Endothelial cell of umbilical vein (primary cell): ENCODE measurements at regions of chr19 and their contacts with region 1.

Region 1: GRCh38 chr19:14136509-14137281 is at the start of gene ASF1B:
- DNase-seq: peak; percentile 100
- H3K4me3 ChIP-seq: peak within 1 kb of the TSS; percentile 59 to 93 (median 72)
- H3K27ac ChIP-seq: peak within 1 kb of the TSS; percentile 71
- H3K4me1 ChIP-seq: peaks cover 15% of the 10 kb centered on the region
- H3K27me3 ChIP-seq: no peaks in the 10 kb centered on the region
- CTCF ChIP-seq: peak; percentile 85 to 96
- POLR2A ChIP-seq: peak; percentile 90
- total RNA-seq, gene ASF1B: 37.1 and 39.1 TPM in 2 replicates

Region 2: DNA sequence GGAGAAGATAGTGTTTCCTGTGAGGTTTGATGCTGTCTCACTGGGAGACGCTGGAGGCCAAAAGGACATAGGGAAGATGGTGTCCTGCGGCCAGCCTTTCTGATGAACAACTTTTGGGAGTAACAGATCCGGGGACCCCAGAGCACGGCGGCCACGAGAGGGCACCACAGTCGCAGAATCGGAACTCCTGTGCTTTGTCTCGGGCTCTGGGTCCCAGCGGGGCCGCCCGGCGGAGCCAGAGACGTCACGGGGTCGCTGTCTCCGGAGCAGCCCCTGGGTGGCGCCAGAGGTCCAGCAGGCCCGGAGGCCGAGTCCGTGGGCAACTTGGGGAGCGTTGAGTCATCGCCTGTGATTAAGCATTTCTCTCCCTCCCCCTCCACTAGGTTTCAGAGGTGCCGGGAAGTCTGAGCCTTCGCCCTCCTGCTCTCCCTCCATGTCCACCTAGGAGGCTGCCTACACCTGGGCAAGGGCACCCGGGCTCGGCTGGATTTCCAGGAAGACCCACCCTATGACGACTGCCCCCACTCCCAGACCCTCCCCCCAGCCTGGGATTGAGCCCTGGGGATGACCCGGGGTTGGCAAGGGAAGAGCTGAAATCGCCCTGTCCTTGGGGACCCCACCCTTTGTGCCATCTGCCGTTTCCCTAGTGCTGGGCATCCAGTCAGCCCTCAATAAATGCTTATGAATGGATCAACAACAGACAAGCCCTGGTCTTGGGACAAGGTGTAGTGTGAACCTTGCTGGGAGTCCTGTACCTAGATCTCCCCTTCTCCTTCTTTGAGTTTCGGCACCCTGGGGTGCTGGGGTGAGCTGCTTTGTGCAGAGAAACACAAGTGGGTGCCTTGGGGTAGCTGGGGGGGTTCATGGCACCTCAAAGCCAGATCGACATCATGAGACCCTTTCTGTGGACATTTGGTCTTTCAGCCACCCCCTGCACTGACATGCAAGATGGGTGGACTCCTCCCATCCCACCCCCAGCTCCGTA is 256.3 kb before region 1 on chr19:
- CTCF ChIA-PET with region 1: interaction called, 11 read pairs
- POLR2A ChIA-PET with region 1: no interaction called
- dilution Hi-C with region 1: no loop called
- intact Hi-C with region 1: loop called (anchors 1 kb)
- DNase-seq: peak; percentile 96
- H3K4me3 ChIP-seq: peak overlapping the region in 1 of 3 experiments; percentile 4
- H3K27ac ChIP-seq: peak overlapping the region; percentile 78
- H3K4me1 ChIP-seq: peaks cover 5% of the 10 kb centered on the region
- H3K27me3 ChIP-seq: no peaks in the 10 kb centered on the region
- CTCF ChIP-seq: peak; percentile 100
- POLR2A ChIP-seq: no peak

Region 3: DNA sequence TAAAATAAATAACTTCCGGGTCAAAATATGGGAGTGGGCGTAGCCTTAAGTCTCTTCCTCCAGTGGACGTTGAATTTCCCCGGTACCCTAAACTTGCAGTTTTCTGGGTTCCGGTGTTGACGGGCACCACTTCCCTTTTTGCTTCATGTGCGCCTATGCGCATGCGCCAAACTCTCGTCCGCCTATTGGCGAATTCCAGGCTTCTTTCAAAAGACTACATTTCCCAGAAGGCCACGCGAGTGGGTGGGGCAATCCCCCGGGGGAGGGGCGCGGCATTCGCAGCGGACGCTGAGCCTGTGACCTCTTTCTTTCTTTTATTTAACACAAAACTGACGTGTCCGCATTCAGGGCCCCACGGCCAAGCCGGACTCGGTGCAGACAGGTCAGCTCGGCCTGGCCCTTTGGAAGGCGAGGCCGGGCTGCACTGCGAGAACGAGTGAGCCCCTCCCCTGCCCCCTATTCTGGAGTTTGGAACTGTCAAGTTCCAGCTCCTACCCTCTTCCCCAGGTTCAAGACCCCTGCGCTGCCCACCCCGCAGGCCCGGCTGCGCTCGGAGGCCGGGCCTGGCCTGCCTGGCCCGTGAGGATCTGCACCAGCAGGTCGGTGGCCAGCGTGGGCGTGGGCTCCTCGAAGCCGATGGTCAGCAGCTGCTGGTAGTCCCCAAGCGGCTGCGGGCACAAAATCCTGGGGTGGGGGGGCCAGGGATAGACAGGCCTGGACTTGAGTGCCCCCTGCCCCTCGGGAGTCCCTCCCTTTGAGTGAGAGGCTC is 55.2 kb before region 1 on chr19:
- CTCF ChIA-PET with region 1: interaction called, 5 read pairs
- POLR2A ChIA-PET with region 1: no interaction called
- dilution Hi-C with region 1: no loop called
- intact Hi-C with region 1: loop called (anchors 1 kb)
- DNase-seq: peak; percentile 100
- H3K4me3 ChIP-seq: peak overlapping the region; percentile 59 to 77 (median 69)
- H3K27ac ChIP-seq: peak overlapping the region; percentile 66
- H3K4me1 ChIP-seq: peaks cover 12% of the 10 kb centered on the region
- H3K27me3 ChIP-seq: no peaks in the 10 kb centered on the region
- CTCF ChIP-seq: no peak
- POLR2A ChIP-seq: peak; percentile 97

Region 4: DNA sequence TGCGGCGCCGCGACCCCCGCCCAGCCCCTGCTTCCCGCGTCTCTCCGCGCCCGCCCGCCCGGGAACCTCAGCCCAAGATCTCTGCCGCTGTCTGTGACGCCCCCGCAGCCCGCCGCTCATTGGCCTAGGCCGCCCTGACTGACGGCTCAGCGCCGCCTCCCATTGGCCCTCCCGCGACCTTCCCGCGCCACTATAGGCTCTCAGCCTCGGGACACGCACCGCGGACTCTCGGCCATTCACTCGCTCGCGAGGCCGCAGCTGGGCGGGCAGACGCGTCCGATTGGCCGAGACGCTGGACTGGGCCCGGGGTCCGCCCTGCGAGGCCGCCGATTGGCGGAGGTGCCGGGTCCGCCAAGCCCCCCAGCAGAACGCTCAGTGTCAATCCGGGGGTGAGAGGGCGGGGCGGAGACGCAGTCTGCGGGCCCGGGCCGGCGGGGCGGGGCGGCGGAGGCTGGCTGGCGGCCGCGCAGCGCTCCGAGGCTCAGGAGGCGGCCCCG is 19.0 kb before region 1 on chr19 and contains the start of gene PRKACA:
- CTCF ChIA-PET with region 1: interaction called, 27 read pairs
- POLR2A ChIA-PET with region 1: interaction called, 3 read pairs
- dilution Hi-C with region 1: no loop called
- intact Hi-C with region 1: loop called (anchors 1 kb)
- DNase-seq: peak; percentile 99
- H3K4me3 ChIP-seq: peak within 1 kb of the TSS; percentile 67 to 84 (median 80)
- H3K27ac ChIP-seq: peak within 1 kb of the TSS; percentile 94
- H3K4me1 ChIP-seq: peaks cover 25% of the 10 kb centered on the region
- H3K27me3 ChIP-seq: no peaks in the 10 kb centered on the region
- CTCF ChIP-seq: no peak
- POLR2A ChIP-seq: no peak
- total RNA-seq, gene PRKACA: 97.5 and 110 TPM in 2 replicates

Region 5: GRCh38 chr19:14198384-14199376 is 62.0 kb after region 1 on chr19:
- CTCF ChIA-PET with region 1: no interaction called
- POLR2A ChIA-PET with region 1: no interaction called
- dilution Hi-C with region 1: no loop called
- intact Hi-C with region 1: loop called (anchors 2 kb)
- DNase-seq: no peak
- H3K4me3 ChIP-seq: no peak overlapping the region
- H3K27ac ChIP-seq: no peak overlapping the region
- H3K4me1 ChIP-seq: no peaks in the 10 kb centered on the region
- H3K27me3 ChIP-seq: no peaks in the 10 kb centered on the region
- CTCF ChIP-seq: peak in 1 of 2 donors; percentile 2
- POLR2A ChIP-seq: no peak

Region 6: DNA sequence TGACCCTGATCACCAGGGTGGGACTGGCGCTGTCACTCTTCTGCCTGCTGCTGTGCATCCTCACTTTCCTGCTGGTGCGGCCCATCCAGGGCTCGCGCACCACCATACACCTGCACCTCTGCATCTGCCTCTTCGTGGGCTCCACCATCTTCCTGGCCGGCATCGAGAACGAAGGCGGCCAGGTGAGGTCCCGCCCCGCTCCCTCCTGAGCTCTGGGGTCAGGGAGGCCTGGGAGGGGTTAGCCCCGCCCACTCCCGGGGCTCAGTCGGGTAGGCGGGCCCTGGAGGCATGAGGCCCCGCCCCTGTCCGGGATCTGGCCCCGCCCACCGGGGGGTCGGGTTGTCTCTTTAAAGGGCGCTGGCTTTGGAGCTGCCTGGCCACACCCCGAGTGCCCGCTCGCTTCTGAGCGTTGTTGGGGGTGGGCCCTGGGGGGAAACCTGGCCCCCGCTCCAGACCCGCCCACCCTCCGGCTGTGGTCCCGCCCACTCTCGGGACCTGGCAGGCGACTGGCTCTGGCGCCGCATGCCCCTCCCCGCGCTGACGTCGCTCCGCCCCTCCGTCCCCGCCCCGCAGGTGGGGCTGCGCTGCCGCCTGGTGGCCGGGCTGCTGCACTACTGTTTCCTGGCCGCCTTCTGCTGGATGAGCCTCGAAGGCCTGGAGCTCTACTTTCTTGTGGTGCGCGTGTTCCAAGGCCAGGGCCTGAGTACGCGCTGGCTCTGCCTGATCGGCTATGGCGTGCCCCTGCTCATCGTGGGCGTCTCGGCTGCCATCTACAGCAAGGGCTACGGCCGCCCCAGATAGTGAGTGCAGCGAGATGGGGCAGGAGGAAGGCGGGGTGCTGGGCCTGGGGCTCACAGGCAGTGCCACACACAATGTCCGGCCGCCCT is 269.3 kb after region 1 on chr19:
- CTCF ChIA-PET with region 1: interaction called, 36 read pairs
- POLR2A ChIA-PET with region 1: no interaction called
- dilution Hi-C with region 1: no loop called
- intact Hi-C with region 1: loop called (anchors 1 kb)
- DNase-seq: peak; percentile 93
- H3K4me3 ChIP-seq: peak overlapping the region in 1 of 3 experiments; percentile 9
- H3K27ac ChIP-seq: no peak overlapping the region
- H3K4me1 ChIP-seq: no peaks in the 10 kb centered on the region
- H3K27me3 ChIP-seq: no peaks in the 10 kb centered on the region
- CTCF ChIP-seq: peak; percentile 36 to 92
- POLR2A ChIP-seq: no peak

Region 7: DNA sequence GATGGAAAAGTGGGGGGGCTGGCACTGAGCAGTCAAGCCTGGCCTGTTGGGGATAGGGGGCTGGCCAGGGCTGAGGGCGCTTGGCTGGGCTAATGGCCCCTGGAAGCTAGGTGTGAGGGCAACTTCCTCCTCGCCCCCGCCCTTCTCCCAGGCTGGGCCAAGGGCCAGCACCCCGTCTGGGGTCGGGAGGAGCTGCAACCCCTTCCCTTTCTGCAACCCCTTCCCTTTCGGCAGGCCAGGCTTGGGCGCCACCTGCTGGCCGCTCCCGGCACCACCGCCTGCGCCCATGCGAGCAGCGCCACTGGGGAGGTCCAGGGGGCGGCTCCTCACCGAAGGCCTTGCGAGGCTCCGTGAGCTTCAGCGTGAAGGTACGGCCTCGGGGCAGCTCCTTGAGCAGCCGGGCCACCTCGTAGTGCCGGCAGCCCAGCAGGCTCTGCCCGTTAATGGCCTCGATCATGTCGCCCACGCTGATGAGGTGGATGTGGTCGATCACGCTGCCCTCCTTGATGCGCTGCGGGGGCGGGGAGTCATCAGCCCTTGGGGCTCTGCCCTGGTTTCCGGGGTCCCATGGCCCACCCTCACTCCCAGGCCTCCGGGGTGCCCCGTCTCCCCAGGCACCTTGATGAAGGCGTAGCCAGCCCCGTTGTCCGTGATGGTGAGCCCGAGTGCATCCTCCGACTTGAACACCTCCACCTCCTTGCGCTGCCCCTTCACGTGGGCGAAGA is 343.4 kb after region 1 on chr19:
- CTCF ChIA-PET with region 1: interaction called, 6 read pairs
- POLR2A ChIA-PET with region 1: no interaction called
- dilution Hi-C with region 1: no loop called
- intact Hi-C with region 1: loop called (anchors 5 kb)
- DNase-seq: no peak
- H3K4me3 ChIP-seq: no peak overlapping the region
- H3K27ac ChIP-seq: no peak overlapping the region
- H3K4me1 ChIP-seq: peaks cover 9% of the 10 kb centered on the region
- H3K27me3 ChIP-seq: no peaks in the 10 kb centered on the region
- CTCF ChIP-seq: peak; percentile 88 to 97
- POLR2A ChIP-seq: no peak